CD4-positive, alpha-beta memory T cell (primary cell): ENCODE measurements at regions of chr18 and their contacts with region 1.

Region 1: DNA sequence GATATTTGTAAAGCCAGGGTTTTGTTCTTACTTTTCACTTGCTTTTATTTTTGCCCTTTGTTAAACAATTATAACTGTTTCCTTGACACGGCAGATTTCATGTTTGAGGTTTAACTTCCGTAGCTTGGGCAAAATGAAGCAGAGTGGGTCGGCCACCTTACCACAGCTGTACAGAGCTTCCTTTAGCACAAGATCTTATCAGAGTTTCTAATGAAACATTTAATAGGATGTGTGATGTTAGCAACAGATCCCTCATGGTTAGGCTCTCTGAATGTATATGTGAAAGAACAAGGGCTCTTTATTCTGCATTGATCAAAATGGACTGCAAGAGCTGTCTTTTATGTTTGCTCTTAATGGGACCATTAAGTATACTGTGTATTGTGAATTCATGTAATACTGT is 22.3 kb downstream of the RNF125 start:
- DNase-seq: peak; percentile 74 to 78 (median 75)
- H3K4me3 ChIP-seq: no peak overlapping the region
- H3K4me3 Mint-ChIP-seq: peak overlapping the region; percentile 55 to 84 (median 70)
- H3K27ac ChIP-seq: peak overlapping the region; percentile 21
- H3K27ac Mint-ChIP-seq: peak overlapping the region; percentile 61 to 92 (median 87)
- H3K4me1 ChIP-seq: peaks cover 75% of the 10 kb centered on the region
- H3K4me1 Mint-ChIP-seq: peaks cover 48 to 75% (median 58%) of the 10 kb centered on the region in 4 donors
- H3K27me3 ChIP-seq: no peaks in the 10 kb centered on the region
- H3K27me3 Mint-ChIP-seq: no peaks in the 10 kb centered on the region

Region 2: GRCh38 chr18:32086861-32087260 is 45.9 kb after region 1 on chr18:
- CTCF ChIA-PET with region 1: interaction called, 4 read pairs
- POLR2A ChIA-PET with region 1: interaction called, 13 read pairs
- intact Hi-C with region 1: loop called (anchors 1 kb)
- DNase-seq: no peak
- H3K4me3 ChIP-seq: no peak overlapping the region
- H3K4me3 Mint-ChIP-seq: peak overlapping the region in 2 of 8 donors; percentile 16 to 29
- H3K27ac ChIP-seq: no peak overlapping the region
- H3K27ac Mint-ChIP-seq: peak overlapping the region in 5 of 7 donors; percentile 13 to 95 (median 69)
- H3K4me1 ChIP-seq: peaks cover 44% of the 10 kb centered on the region
- H3K4me1 Mint-ChIP-seq: peaks cover 33 to 53% (median 42%) of the 10 kb centered on the region in 4 donors
- H3K27me3 ChIP-seq: no peaks in the 10 kb centered on the region
- H3K27me3 Mint-ChIP-seq: no peaks in the 10 kb centered on the region